ENCODE measurements at regions of chr14 and their contacts with region 1.

Region 1: DNA sequence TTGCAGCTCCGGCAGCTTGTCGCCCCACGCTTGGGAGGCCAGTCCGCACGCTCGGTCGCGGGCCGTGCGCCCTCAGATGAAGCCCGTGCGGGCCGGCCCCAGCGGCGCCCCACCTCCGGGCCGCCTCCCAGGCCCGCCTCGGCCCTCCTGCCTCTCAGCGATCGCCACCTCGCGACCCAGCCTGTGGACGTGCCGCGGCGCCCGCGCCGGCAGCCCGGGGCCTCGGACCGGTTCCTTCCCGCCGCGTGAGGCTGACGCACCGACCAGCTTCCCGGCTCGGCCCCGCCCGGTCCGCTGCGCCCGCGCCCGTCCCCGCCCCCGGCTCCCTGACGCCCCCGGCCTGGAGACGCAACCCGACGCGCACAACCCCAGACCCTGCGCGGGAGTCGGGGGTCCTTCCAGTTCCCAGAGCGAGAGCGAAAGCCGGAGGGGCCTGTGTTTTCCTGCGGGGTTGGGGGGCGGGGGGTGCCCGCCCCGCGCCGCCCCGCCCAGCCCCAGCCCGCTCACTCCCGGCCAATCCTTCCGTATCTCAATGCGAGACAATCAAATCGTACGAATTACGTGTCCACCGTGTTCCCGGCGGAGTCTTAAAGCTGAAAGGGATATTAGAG is at the start of gene ERO1A:
- DNase-seq: peak; percentile 83
- ATAC-seq: peak; percentile 91
- H3K4me3 ChIP-seq: peak within 1 kb of the TSS; percentile 74
- H3K27ac ChIP-seq: peak within 1 kb of the TSS; percentile 96
- H3K4me1 ChIP-seq: peaks cover 2% of the 10 kb centered on the region
- H3K27me3 ChIP-seq: no peaks in the 10 kb centered on the region
- CTCF ChIP-seq: peak; percentile 21; the same call in 1 of the 2 replicates
- POLR2A ChIP-seq: peak; percentile 78
- RAD21 ChIP-seq: no peak
- total RNA-seq, gene ERO1A: 38.0 and 44.6 TPM in 2 replicates

Region 2: GRCh38 chr14:51666826-51667225 is 1028.8 kb before region 1 on chr14:
- CTCF ChIA-PET with region 1: no interaction called
- POLR2A ChIA-PET with region 1: no interaction called
- dilution Hi-C with region 1: no loop called
- in situ Hi-C with region 1: no loop called
- intact Hi-C with region 1: no loop called
- DNase-seq: no peak
- ATAC-seq: no peak; the same call in 1 of the 2 replicates
- H3K4me3 ChIP-seq: no peak overlapping the region
- H3K27ac ChIP-seq: peak overlapping the region; percentile 25; the same call in 1 of the 2 replicates
- H3K4me1 ChIP-seq: peaks cover 10% of the 10 kb centered on the region
- H3K27me3 ChIP-seq: no peaks in the 10 kb centered on the region
- CTCF ChIP-seq: no peak
- POLR2A ChIP-seq: no peak
- RAD21 ChIP-seq: no peak

Region 3: GRCh38 chr14:52552063-52552988 is 143.3 kb before region 1 on chr14 and contains the starts of genes GPR137C and TXNDC16:
- CTCF ChIA-PET with region 1: no interaction called
- POLR2A ChIA-PET with region 1: interaction called, 3 read pairs
- dilution Hi-C with region 1: no loop called
- in situ Hi-C with region 1: no loop called
- intact Hi-C with region 1: loop called (anchors 2 kb)
- DNase-seq: peak; percentile 99
- ATAC-seq: peak; percentile 99
- H3K4me3 ChIP-seq: peak within 1 kb of the TSS; percentile 58
- H3K27ac ChIP-seq: no peak within 1 kb of the TSS; the same call in 1 of the 2 replicates
- H3K4me1 ChIP-seq: no peaks in the 10 kb centered on the region
- H3K27me3 ChIP-seq: no peaks in the 10 kb centered on the region
- CTCF ChIP-seq: no peak
- POLR2A ChIP-seq: peak; percentile 32; the same call in 1 of the 2 replicates
- RAD21 ChIP-seq: no peak
- total RNA-seq, gene GPR137C: 0.72 and 1.4 TPM in 2 replicates
- total RNA-seq, gene TXNDC16: 1.4 and 1.9 TPM in 2 replicates

Region 4: DNA sequence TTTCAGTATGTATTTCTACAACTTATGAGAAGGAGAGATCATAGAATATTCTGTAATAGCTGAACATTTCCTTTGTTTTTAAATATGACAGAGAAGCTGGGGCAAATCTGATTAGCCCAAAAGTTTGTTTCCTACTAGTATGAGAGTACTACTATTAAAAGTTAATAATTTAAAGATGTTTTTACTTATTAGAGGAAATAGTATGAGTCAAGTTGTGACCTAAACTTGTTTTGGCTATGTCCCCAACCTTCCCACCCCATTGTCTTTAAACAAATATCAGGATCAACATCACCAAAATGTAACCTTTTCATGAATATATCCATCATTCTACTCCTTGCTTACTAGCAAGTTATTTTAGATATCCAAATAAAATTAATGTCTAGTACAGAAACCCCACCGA is 85.3 kb after region 1 on chr14:
- CTCF ChIA-PET with region 1: no interaction called
- POLR2A ChIA-PET with region 1: no interaction called
- dilution Hi-C with region 1: no loop called
- in situ Hi-C with region 1: no loop called
- intact Hi-C with region 1: no loop called
- DNase-seq: no peak
- ATAC-seq: no peak
- H3K4me3 ChIP-seq: no peak overlapping the region
- H3K27ac ChIP-seq: no peak overlapping the region
- H3K4me1 ChIP-seq: no peaks in the 10 kb centered on the region
- H3K27me3 ChIP-seq: no peaks in the 10 kb centered on the region
- CTCF ChIP-seq: no peak
- POLR2A ChIP-seq: no peak
- RAD21 ChIP-seq: no peak